ENCODE measurements at regions of chr11 and their contacts with region 1.

Region 1: DNA sequence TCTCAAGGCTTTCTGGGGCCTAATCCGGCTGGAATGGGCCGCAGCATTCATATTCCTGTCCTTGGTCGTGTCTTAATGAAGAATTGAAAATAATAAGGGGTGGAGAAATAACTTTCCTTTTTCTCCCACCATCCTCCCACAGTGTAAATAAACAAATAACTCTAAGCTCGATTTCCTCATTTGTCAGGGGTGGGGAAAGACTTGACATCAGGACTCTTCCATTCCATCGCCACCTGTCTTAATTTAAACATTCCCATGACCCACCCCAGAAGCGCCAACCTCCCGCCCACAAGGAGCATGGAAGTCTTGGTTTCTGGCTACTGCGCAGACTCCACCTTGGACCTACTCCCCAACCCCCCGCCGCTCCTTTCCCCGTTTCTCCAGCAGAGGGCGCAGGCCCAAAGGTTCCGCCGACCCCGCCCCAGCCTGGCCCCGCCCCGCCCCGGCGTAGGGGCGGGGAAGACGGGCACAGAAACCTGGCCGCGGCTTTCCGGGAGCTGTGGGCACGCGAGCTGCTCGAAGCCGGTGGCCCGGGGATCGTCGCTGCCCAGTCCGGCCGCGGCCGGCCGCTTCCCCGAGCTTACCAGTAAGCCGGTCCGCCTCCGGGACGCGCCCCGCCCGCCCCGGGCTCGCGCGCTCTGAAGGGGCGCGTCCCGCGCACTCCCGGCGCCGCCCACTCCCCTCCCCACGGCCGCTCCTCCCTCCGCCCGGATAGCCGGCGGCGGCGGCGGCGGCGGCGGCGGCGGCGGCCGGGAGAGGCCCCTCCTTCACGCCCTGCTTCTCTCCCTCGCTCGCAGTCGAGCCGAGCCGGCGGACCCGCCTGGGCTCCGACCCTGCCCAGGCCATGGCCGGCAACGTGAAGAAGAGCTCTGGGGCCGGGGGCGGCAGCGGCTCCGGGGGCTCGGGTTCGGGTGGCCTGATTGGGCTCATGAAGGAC is at the start of gene CBL:
- DNase-seq: peak; percentile 96 to 99 (median 99)
- ATAC-seq: peak; percentile 97
- H3K4me3 ChIP-seq: peak within 1 kb of the TSS; percentile 76
- H3K4me1 ChIP-seq: peaks cover 7% of the 10 kb centered on the region
- CTCF ChIP-seq: peak; percentile 91
- total RNA-seq, gene CBL: 11.0 to 24.4 (median 13.1) TPM

Region 2: GRCh38 chr11:119323538-119324033 is 117.7 kb after region 1 on chr11:
- intact Hi-C with region 1: loop called in 1 of 2 experiments (anchors 10 kb)
- DNase-seq: peak in 2 of 3 donors; percentile 66 to 91
- ATAC-seq: peak; percentile 32
- H3K4me3 ChIP-seq: no peak overlapping the region
- H3K4me1 ChIP-seq: peaks cover 14% of the 10 kb centered on the region
- CTCF ChIP-seq: peak; percentile 69

Measured in mucosa of descending colon (tissue), 3 donors.